Ascending aorta (tissue), 2 donors: ENCODE measurements at regions of chr5 and their contacts with region 1.

Region 1: GRCh38 chr5:146794326-146795029 is 84.1 kb downstream of the PPP2R2B start:
- DNase-seq: no peak
- H3K4me3 ChIP-seq: peak overlapping the region in 1 of 2 donors; percentile 17
- H3K27ac ChIP-seq: peak overlapping the region; percentile 50 to 60
- H3K4me1 ChIP-seq: peaks cover 6 to 40% of the 10 kb centered on the region in 2 donors
- H3K27me3 ChIP-seq: no peaks in the 10 kb centered on the region
- CTCF ChIP-seq: no peak

Region 2: GRCh38 chr5:146283344-146283761 is 511.1 kb before region 1 on chr5:
- intact Hi-C with region 1: no loop called
- DNase-seq: no peak
- H3K4me3 ChIP-seq: no peak overlapping the region
- H3K27ac ChIP-seq: peak overlapping the region; percentile 39 to 47
- H3K4me1 ChIP-seq: peaks cover 0 to 12% of the 10 kb centered on the region in 2 donors
- H3K27me3 ChIP-seq: no peaks in the 10 kb centered on the region
- CTCF ChIP-seq: no peak

Region 3: GRCh38 chr5:146667633-146668272 is 126.7 kb before region 1 on chr5:
- intact Hi-C with region 1: loop called (anchors 5 kb)
- DNase-seq: no peak
- H3K4me3 ChIP-seq: no peak overlapping the region
- H3K27ac ChIP-seq: peak overlapping the region; percentile 79 to 82
- H3K4me1 ChIP-seq: peaks cover 0 to 8% of the 10 kb centered on the region in 2 donors
- H3K27me3 ChIP-seq: no peaks in the 10 kb centered on the region
- CTCF ChIP-seq: no peak

Region 4: GRCh38 chr5:146725025-146725424 is 69.5 kb before region 1 on chr5:
- intact Hi-C with region 1: loop called (anchors 5 kb)
- DNase-seq: no peak
- H3K4me3 ChIP-seq: no peak overlapping the region
- H3K27ac ChIP-seq: no peak overlapping the region
- H3K4me1 ChIP-seq: peaks cover 0 to 7% of the 10 kb centered on the region in 2 donors
- H3K27me3 ChIP-seq: no peaks in the 10 kb centered on the region
- CTCF ChIP-seq: no peak

Region 5: GRCh38 chr5:146902471-146902870 is 108.0 kb after region 1 on chr5:
- intact Hi-C with region 1: no loop called
- DNase-seq: no peak
- H3K4me3 ChIP-seq: no peak overlapping the region
- H3K27ac ChIP-seq: no peak overlapping the region
- H3K4me1 ChIP-seq: no peaks in the 10 kb centered on the region
- H3K27me3 ChIP-seq: no peaks in the 10 kb centered on the region
- CTCF ChIP-seq: no peak